Naive thymus-derived CD4-positive, alpha-beta T cell (primary cell): ENCODE measurements at regions of chr1 and their contacts with region 1.

Region 1: GRCh38 chr1:167936068-167936929 is at the start of gene DCAF6:
- DNase-seq: peak; percentile 94 to 99 (median 99)
- ATAC-seq: peak; percentile 89
- H3K4me3 ChIP-seq: peak within 1 kb of the TSS; percentile 89
- H3K4me3 Mint-ChIP-seq: peak within 1 kb of the TSS; percentile 90 to 99 (median 96)
- H3K27ac ChIP-seq: peak within 1 kb of the TSS; percentile 89
- H3K27ac Mint-ChIP-seq: peak within 1 kb of the TSS; percentile 90 to 100 (median 99)
- H3K4me1 ChIP-seq: peaks cover 18 to 31% of the 10 kb centered on the region in 2 donors
- H3K4me1 Mint-ChIP-seq: peaks cover 29 to 58% (median 40%) of the 10 kb centered on the region in 7 donors
- H3K27me3 ChIP-seq: no peaks in the 10 kb centered on the region
- H3K27me3 Mint-ChIP-seq: no peaks in the 10 kb centered on the region
- total RNA-seq, gene DCAF6: 27.4 to 32.7 (median 29.1) TPM

Region 2: DNA sequence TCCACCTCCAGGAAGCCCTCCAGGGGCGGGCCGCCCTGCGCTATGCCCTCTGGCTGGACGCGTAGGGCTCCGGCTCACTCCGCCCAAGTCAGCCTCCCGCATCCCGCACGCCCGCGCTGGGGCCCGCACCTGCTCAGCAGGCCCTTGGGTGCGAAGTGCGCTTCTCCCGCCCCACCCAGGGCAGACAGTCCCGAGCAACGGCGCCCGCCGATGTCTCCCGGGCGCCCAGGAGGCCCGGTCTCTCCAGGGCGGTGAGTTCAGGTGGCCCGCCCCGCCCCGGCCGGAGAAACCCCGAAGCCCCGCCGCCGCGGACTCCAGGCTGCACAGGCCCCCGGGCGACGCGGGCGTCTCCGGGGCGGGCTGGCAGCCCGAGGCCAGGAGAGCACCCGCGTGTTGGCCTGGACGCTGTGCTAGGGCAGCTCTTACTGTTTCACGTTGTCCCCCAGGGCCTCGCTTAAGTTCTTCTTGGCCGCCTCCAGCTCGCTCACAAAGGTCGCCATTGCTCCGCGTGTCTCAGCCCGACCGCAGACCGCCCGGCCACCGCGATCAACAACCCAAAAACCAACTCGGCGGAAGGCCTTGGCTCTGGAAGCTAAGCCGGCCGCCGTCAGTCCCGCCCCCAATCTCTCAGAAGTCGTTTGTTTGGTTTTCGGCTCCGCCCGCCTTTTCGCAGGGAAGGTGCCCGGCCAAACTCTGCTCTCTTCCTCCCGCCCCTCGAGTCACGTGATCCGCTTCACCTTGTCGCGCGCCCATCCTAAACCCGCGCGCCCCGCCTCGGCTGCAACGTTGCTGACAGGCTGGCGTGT is 1060.4 kb before region 1 on chr1 and contains the start of gene TADA1:
- CTCF ChIA-PET with region 1: no interaction called
- POLR2A ChIA-PET with region 1: interaction called, 7 read pairs
- intact Hi-C with region 1: loop called (anchors 1 to 5 kb)
- DNase-seq: peak; percentile 87 to 97 (median 96)
- ATAC-seq: peak; percentile 95
- H3K4me3 ChIP-seq: peak within 1 kb of the TSS; percentile 64
- H3K4me3 Mint-ChIP-seq: peak within 1 kb of the TSS; percentile 93 to 100 (median 96)
- H3K27ac ChIP-seq: peak within 1 kb of the TSS; percentile 83
- H3K27ac Mint-ChIP-seq: peak within 1 kb of the TSS; percentile 75 to 99 (median 98)
- H3K4me1 ChIP-seq: peaks cover 10 to 12% of the 10 kb centered on the region in 2 donors
- H3K4me1 Mint-ChIP-seq: peaks cover 43 to 63% (median 55%) of the 10 kb centered on the region in 7 donors
- H3K27me3 ChIP-seq: no peaks in the 10 kb centered on the region
- H3K27me3 Mint-ChIP-seq: peaks cover 0 to 11% (median 0%) of the 10 kb centered on the region in 5 donors
- total RNA-seq, gene TADA1: 9.4 to 16.2 (median 15.6) TPM

Region 3: GRCh38 chr1:167553136-167554027 is 382.9 kb before region 1 on chr1 and contains the start of gene CREG1:
- CTCF ChIA-PET with region 1: no interaction called
- POLR2A ChIA-PET with region 1: no interaction called
- intact Hi-C with region 1: loop called in 1 of 2 experiments (anchors 5 kb)
- DNase-seq: peak; percentile 82 to 92 (median 88)
- ATAC-seq: peak; percentile 98
- H3K4me3 ChIP-seq: peak within 1 kb of the TSS; percentile 71
- H3K4me3 Mint-ChIP-seq: peak within 1 kb of the TSS; percentile 85 to 97 (median 92)
- H3K27ac ChIP-seq: peak within 1 kb of the TSS; percentile 72
- H3K27ac Mint-ChIP-seq: peak within 1 kb of the TSS; percentile 43 to 88 (median 80)
- H3K4me1 ChIP-seq: peaks cover 19% of the 10 kb centered on the region in 2 donors
- H3K4me1 Mint-ChIP-seq: peaks cover 35 to 58% (median 46%) of the 10 kb centered on the region in 7 donors
- H3K27me3 ChIP-seq: no peaks in the 10 kb centered on the region
- H3K27me3 Mint-ChIP-seq: peaks cover 0 to 4% (median 0%) of the 10 kb centered on the region in 5 donors
- total RNA-seq, gene CREG1: 10.6 to 33.4 (median 23.1) TPM

Region 4: DNA sequence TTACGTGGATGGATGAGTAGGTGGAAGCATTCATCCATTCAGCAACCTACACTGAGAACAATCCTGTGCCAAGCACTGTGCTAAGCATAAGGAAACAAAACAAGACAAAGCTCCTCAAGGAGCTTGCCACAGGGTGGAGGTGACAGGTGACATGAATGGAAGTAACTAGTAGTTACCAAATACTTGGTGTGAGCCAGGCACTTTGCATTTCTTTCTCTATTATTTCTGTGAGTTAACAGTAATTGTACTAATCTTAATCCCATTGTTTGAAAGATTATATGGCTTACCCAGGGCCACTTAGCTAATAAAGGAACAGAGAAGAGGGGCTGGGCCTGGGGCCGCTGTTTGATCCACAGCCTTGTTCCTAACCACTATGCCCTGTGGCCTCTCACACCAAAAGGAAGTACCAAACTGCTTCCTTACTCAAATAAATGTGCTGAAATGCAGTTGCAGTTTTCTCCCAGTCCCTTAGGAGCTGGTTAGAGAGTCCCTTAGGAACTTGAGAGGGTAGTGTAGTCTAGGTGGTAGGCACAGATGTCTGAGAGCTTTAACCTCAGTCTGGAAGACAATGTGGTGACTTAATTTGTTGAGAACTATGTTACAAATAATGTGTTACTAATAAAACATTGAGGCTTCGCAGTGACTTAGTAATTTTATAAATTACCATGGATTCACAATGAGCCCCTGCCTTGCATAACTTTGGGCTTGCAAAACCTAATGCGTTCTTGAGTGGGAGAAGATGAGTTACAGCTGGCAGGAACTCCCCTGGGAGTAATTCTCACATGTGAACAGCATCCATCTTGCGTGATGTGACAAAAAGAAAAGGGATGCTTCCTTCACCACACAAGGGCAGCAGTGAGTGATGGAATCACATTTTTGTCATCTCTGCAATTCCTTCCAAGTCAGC is 144.8 kb before region 1 on chr1:
- CTCF ChIA-PET with region 1: no interaction called
- POLR2A ChIA-PET with region 1: no interaction called
- intact Hi-C with region 1: no loop called
- DNase-seq: no peak
- ATAC-seq: peak; percentile 40
- H3K4me3 ChIP-seq: no peak overlapping the region
- H3K4me3 Mint-ChIP-seq: no peak overlapping the region
- H3K27ac ChIP-seq: no peak overlapping the region
- H3K27ac Mint-ChIP-seq: peak overlapping the region in 1 of 9 donors; percentile 12
- H3K4me1 ChIP-seq: no peaks in the 10 kb centered on the region
- H3K4me1 Mint-ChIP-seq: peaks cover 0 to 7% (median 0%) of the 10 kb centered on the region in 7 donors
- H3K27me3 ChIP-seq: no peaks in the 10 kb centered on the region
- H3K27me3 Mint-ChIP-seq: no peaks in the 10 kb centered on the region

Region 5: DNA sequence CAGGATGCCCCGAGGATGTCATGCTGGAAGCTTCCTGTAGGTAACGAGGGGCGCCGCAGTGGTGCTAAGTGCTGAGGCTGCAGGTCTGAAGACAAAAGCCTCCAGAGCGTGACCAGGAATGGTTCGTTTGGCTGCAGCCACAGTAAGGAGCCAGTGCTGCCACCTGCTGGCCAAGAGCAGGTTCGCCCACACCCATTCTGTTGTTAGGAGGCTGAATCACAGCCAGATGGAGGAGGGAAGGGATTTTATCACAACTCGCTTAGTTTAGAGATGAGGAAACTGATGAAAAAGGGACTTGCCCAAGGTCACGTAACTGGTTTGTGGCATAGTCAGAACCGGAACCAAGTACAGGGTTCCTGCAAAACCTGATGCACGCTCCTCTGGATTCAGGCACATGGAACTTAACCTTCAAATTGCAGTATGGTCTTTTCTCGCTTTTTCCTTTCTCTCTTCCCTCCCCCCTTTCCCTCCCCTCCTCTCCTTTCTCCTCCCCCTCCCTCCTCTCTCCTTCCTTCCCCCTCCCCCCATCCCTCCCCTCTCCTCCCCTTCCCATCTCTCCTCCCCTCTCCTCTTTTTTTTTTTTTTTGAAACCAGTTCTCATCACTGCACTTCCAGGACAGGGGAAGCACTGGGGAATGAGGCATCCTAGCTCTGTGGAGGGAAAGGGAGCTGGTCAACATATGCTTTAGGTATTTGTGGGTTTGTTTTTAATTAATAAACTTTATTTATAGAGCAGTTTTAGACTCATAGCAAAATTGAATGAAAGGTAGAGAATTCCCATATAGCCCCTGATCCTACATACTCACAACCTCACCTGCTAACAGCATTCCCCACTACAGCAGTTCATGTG is 132.7 kb before region 1 on chr1:
- CTCF ChIA-PET with region 1: no interaction called
- POLR2A ChIA-PET with region 1: no interaction called
- intact Hi-C with region 1: loop called (anchors 1 to 2 kb)
- DNase-seq: peak; percentile 41 to 83 (median 67)
- ATAC-seq: peak; percentile 95
- H3K4me3 ChIP-seq: no peak overlapping the region
- H3K4me3 Mint-ChIP-seq: peak overlapping the region in 9 of 10 donors; percentile 5 to 74 (median 60)
- H3K27ac ChIP-seq: no peak overlapping the region
- H3K27ac Mint-ChIP-seq: peak overlapping the region in 6 of 9 donors; percentile 38 to 93 (median 83)
- H3K4me1 ChIP-seq: peaks cover 20 to 21% of the 10 kb centered on the region in 2 donors
- H3K4me1 Mint-ChIP-seq: peaks cover 16 to 29% (median 26%) of the 10 kb centered on the region in 7 donors
- H3K27me3 ChIP-seq: no peaks in the 10 kb centered on the region
- H3K27me3 Mint-ChIP-seq: peaks cover 0 to 7% (median 0%) of the 10 kb centered on the region in 5 donors

Region 6: DNA sequence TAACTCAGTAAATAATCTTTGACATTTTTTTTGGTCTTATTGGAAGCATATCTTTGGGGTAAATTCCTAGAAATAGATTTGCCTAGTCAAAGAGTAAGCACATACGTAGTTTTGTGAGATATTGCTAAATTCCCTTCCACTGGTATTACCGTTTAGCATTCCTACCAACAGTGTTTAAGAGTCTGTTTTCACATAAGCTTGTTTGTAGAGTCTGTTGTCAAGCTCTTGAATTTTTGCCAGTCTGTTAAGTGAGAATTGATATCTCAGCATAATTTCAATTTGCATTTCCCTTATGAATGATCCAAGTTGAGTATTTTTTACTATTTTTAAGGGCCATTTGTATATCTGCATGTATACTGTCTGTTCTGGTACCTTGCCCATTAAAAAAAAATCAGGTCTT is 37.5 kb after region 1 on chr1:
- CTCF ChIA-PET with region 1: no interaction called
- POLR2A ChIA-PET with region 1: interaction called, 3 read pairs
- intact Hi-C with region 1: loop called in 1 of 2 experiments (anchors 5 kb)
- DNase-seq: no peak
- ATAC-seq: no peak
- H3K4me3 ChIP-seq: no peak overlapping the region
- H3K4me3 Mint-ChIP-seq: no peak overlapping the region
- H3K27ac ChIP-seq: no peak overlapping the region
- H3K27ac Mint-ChIP-seq: no peak overlapping the region
- H3K4me1 ChIP-seq: no peaks in the 10 kb centered on the region
- H3K4me1 Mint-ChIP-seq: peaks cover 0 to 10% (median 0%) of the 10 kb centered on the region in 7 donors
- H3K27me3 ChIP-seq: no peaks in the 10 kb centered on the region
- H3K27me3 Mint-ChIP-seq: no peaks in the 10 kb centered on the region

Region 7: DNA sequence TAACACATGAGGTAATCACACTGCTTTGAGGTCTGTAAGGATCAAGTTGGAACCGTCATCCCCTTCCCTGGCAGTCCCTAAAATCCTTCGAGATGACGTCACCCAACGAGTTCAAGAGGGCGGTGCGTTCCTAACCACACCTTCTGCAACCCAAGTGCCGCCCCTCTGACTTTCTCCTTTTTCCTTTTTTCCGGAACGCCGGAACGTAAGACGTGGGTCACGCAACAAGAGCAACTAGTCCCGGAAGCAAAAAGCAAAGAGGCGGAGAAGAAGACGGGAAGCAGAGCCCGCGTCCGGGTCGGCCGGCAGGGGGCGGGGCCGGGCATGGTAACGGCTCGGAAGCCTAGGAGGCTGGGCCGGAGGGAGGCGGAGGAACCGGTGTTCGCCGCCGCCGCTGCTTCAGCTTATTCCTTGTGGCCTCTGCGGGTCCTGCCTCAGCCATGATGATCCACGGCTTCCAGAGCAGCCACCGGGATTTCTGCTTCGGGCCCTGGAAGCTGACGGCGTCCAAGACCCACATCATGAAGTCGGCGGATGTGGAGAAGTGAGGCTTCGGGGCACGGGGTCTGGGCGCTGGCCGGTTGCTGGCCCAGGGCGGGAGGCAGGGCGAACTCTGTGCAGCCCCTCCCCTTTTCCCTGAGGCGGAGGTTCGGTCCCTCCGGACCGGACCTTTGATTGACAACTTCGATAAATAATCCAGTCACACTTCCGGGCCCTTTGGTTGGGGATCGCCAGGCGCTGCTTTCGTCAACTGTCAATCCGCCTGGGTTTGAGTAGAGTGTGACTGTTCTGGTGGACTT is 242.5 kb after region 1 on chr1 and contains the start of gene TIPRL:
- CTCF ChIA-PET with region 1: no interaction called
- POLR2A ChIA-PET with region 1: interaction called, 3 read pairs
- intact Hi-C with region 1: loop called (anchors 1 kb)
- DNase-seq: peak; percentile 88 to 94 (median 93)
- ATAC-seq: peak; percentile 95
- H3K4me3 ChIP-seq: peak within 1 kb of the TSS; percentile 80
- H3K4me3 Mint-ChIP-seq: no peak within 1 kb of the TSS
- H3K27ac ChIP-seq: peak within 1 kb of the TSS; percentile 96
- H3K27ac Mint-ChIP-seq: no peak within 1 kb of the TSS
- H3K4me1 ChIP-seq: peaks cover 14 to 16% of the 10 kb centered on the region in 2 donors
- H3K4me1 Mint-ChIP-seq: peaks cover 3 to 20% (median 9%) of the 10 kb centered on the region in 7 donors
- H3K27me3 ChIP-seq: no peaks in the 10 kb centered on the region
- H3K27me3 Mint-ChIP-seq: peaks cover 2 to 9% (median 2%) of the 10 kb centered on the region in 5 donors
- total RNA-seq, gene TIPRL: 17.2 to 41.2 (median 23.5) TPM

Region 8: DNA sequence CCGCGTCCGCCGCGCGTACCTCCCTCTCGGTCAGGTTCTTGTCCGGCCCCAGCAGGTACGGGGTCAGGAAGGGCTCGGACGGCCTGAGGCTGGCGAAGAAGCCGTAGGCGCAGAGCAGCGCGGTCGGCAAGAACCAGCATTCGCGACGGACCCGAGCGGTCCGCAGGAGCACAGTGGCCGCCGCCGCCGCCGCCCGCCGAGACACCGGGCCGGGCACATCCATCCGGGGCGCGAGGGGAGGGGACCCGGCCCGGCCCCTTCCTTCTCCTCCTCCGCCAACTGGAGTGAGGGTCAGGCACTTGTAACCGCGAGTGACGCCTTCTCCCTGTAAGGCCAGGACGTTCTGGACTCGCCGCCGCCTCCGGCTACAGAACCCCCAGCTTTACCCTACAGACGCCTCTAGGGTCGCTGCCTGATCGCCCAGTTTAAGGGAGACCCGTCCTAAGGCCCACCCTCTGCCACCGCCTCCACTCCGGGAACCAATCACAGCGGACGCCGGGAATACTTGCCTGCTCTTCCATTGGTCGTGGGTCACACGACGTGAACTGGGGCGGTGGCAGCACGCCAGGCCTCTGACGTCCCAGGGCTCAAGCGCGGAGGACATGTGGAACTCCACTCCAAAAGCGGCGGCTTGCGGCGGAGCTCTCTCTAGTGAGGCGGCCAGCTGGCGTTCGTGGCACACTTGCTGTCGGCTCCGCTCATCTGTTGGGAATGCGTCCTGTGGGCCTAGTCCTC is 1549.4 kb after region 1 on chr1 and contains the start of gene SLC19A2:
- CTCF ChIA-PET with region 1: no interaction called
- POLR2A ChIA-PET with region 1: no interaction called
- intact Hi-C with region 1: loop called in 1 of 2 experiments (anchors 5 kb)
- DNase-seq: peak; percentile 79 to 94 (median 89)
- ATAC-seq: peak; percentile 99
- H3K4me3 ChIP-seq: peak within 1 kb of the TSS; percentile 66
- H3K4me3 Mint-ChIP-seq: peak within 1 kb of the TSS; percentile 87 to 98 (median 94)
- H3K27ac ChIP-seq: peak within 1 kb of the TSS; percentile 81
- H3K27ac Mint-ChIP-seq: peak within 1 kb of the TSS; percentile 86 to 98 (median 94)
- H3K4me1 ChIP-seq: peaks cover 4 to 12% of the 10 kb centered on the region in 2 donors
- H3K4me1 Mint-ChIP-seq: peaks cover 35 to 56% (median 46%) of the 10 kb centered on the region in 7 donors
- H3K27me3 ChIP-seq: no peaks in the 10 kb centered on the region
- H3K27me3 Mint-ChIP-seq: peaks cover 0 to 8% (median 0%) of the 10 kb centered on the region in 5 donors
- total RNA-seq, gene SLC19A2: 3.7 to 5.9 (median 4.8) TPM